Dendritic cell treated with granulocyte-macrophage colony-stimulating factor and Interleukin-4, amounts not matched to agents 40 ng/mL and 50 ng/mL, for 4 days (primary cell): ENCODE measurements at regions of chr10 and their contacts with region 1.

Region 1: DNA sequence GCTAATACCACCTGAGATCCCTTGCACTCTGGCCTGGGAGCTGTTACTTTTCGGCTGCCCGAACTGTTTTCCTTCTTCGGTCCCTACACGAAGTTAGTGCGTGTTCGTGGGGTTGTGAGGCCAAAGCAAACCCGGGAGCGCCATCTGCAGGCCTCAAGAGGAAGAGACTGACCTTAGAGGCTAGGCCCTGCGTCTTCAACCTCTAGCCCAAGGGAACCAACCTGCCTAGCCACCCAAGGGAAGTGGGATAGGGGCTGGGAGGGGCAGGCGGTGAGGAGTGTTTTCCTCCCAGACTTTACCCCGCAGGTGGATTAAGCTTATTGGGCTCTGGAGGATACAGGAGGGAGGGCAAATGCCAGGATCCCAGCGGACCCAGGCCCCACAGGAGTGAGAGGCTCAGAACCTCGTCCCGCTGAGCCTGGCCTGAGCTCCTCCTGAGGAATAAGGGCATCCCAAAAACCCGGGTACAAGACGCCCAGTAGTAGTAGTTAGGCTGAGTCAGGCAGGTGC is 1.7 kb upstream of the PAX2 start:
- H3K4me3 Mint-ChIP-seq: no peak overlapping the region
- H3K27ac Mint-ChIP-seq: no peak overlapping the region
- H3K4me1 Mint-ChIP-seq: peaks cover 23% of the 10 kb centered on the region
- H3K27me3 Mint-ChIP-seq: peaks cover 91% of the 10 kb centered on the region

Region 2: DNA sequence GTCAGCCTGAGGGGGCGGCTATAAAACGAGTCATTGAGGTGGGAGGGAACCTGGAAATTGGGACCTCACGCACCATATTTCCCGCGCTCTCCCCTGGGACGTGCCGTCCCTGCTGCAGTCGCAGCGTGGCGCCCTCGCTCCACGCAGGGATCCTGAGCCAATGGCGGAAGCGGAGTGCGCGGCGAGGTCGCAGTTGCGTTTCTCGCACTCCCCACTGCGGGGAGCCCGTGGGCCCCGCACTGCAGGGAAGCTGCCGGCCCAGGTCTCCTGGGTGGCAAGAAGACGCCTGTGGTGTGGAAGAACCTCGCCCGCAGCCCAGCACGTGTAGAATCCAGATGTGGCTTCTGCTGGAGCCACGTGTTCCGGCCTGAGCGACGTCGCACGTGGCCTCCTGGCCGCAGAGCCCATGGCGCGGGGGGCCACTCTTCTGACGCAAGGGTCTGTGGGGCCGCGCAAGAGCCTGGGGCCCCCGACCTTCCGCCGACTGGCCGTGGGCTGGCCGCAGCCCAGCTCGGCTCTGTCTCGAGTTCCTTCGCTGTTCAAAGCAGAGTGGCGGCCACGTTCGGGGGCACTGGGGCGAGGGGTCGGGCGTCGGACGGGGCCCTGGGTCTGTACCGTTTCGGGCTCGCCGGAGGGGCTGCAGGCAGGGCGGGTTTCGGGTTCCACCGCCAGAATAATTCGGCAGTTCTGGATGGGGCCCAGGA is 181.5 kb before region 1 on chr10:
- intact Hi-C with region 1: loop called (anchors 1 kb)
- H3K4me3 Mint-ChIP-seq: peak overlapping the region; percentile 41
- H3K27ac Mint-ChIP-seq: no peak overlapping the region
- H3K4me1 Mint-ChIP-seq: peaks cover 17% of the 10 kb centered on the region
- H3K27me3 Mint-ChIP-seq: peaks cover 53% of the 10 kb centered on the region

Region 3: GRCh38 chr10:100670828-100671479 is 72.7 kb before region 1 on chr10:
- intact Hi-C with region 1: loop called (anchors 2 kb)
- H3K4me3 Mint-ChIP-seq: no peak overlapping the region
- H3K27ac Mint-ChIP-seq: no peak overlapping the region
- H3K4me1 Mint-ChIP-seq: no peaks in the 10 kb centered on the region
- H3K27me3 Mint-ChIP-seq: peaks cover 70% of the 10 kb centered on the region

Region 4: GRCh38 chr10:100930368-100930767 is 186.7 kb after region 1 on chr10:
- intact Hi-C with region 1: no loop called
- H3K4me3 Mint-ChIP-seq: no peak overlapping the region
- H3K27ac Mint-ChIP-seq: no peak overlapping the region
- H3K4me1 Mint-ChIP-seq: no peaks in the 10 kb centered on the region
- H3K27me3 Mint-ChIP-seq: no peaks in the 10 kb centered on the region

Region 5: DNA sequence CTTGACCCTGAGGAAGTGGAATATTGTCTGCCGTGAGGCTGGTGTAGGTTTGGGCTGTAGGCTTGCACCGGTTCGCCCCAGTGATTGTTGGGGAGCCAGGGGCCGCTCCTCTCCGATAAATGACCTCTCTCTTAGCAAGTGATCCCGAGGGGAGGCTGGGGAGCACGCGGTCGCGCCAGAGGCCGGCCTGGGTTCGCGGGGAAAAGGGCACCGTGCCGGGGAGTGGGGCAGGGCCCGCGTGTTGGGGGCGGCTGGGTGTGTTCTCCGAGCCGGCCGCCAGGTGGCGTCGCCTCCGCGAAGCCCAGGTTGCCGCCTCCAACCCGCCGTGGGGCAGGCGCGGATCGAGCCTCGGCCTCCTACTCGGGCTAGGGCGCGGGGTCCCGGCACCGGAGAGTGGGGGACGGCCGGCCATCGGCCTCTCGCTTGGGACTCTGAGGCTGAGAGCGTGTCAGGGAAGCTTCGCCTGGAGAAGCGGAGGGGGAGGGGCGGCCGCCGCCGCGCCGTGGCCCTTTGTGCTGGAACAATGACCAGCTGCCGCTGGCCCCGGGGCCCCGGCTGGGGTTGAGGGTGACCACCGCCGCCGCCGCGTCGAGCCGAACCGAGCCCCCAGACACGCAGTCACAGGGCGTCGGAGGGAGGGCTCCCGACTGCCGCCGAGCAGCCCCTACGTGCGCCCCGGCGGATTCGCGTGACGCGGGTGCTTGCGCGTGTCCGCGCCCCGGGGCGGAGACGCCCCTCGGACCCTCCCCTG is 255.5 kb after region 1 on chr10:
- intact Hi-C with region 1: no loop called
- H3K4me3 Mint-ChIP-seq: peak overlapping the region; percentile 91
- H3K27ac Mint-ChIP-seq: peak overlapping the region; percentile 71
- H3K4me1 Mint-ChIP-seq: peaks cover 47% of the 10 kb centered on the region
- H3K27me3 Mint-ChIP-seq: peaks cover 7% of the 10 kb centered on the region